ENCODE measurements at regions of chr3 and their contacts with region 1.

Region 1: DNA sequence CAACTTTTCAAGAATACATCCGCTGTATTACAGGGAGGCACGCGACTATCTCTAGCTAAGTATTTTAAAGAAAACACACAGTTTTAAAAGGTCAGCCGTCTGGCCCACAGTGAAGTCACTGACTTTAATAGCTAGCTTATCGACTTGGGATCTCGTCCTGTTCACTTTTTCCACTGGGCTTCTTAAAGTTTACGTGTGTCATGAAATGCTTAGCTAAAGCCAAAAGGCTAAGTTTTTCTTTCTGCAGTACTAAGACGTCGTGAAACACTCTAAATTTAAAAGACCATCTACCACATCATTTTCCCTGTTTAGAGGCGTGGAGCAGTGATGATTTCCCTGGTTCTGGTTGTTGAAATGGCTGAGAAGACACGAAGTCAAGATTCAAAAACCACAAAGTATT is 27.1 kb downstream of the LRIG1 start:
- DNase-seq: no peak
- ATAC-seq: no peak
- H3K4me3 ChIP-seq: no peak overlapping the region
- H3K4me3 Mint-ChIP-seq: peak overlapping the region; percentile 29 to 63 (median 60)
- H3K27ac ChIP-seq: no peak overlapping the region
- H3K27ac Mint-ChIP-seq: peak overlapping the region; percentile 59 to 77
- H3K4me1 ChIP-seq: peaks cover 9 to 24% of the 10 kb centered on the region in 2 experiments
- H3K4me1 Mint-ChIP-seq: peaks cover 15 to 62% (median 27%) of the 10 kb centered on the region in 3 donors
- H3K27me3 ChIP-seq: no peaks in the 10 kb centered on the region
- H3K27me3 Mint-ChIP-seq: no peaks in the 10 kb centered on the region

Region 2: GRCh38 chr3:66386925-66387650 is 86.6 kb before region 1 on chr3:
- CTCF ChIA-PET with region 1: interaction called in 1 of 2 experiments, 12 read pairs
- POLR2A ChIA-PET with region 1: no interaction called
- DNase-seq: no peak
- ATAC-seq: no peak
- H3K4me3 ChIP-seq: no peak overlapping the region
- H3K4me3 Mint-ChIP-seq: no peak overlapping the region
- H3K27ac ChIP-seq: no peak overlapping the region
- H3K27ac Mint-ChIP-seq: peak overlapping the region; percentile 43 to 66
- H3K4me1 ChIP-seq: peaks cover 0 to 7% of the 10 kb centered on the region in 2 experiments
- H3K4me1 Mint-ChIP-seq: peaks cover 43 to 58% (median 49%) of the 10 kb centered on the region in 3 donors
- H3K27me3 ChIP-seq: no peaks in the 10 kb centered on the region
- H3K27me3 Mint-ChIP-seq: no peaks in the 10 kb centered on the region

Region 3: GRCh38 chr3:66456711-66457173 is 16.9 kb before region 1 on chr3:
- CTCF ChIA-PET with region 1: no interaction called
- POLR2A ChIA-PET with region 1: no interaction called
- DNase-seq: peak in 8 of 35 experiments; percentile 5 to 29 (median 12)
- ATAC-seq: peak in 2 of 4 experiments; percentile 34 to 40
- H3K4me3 ChIP-seq: no peak overlapping the region
- H3K4me3 Mint-ChIP-seq: no peak overlapping the region
- H3K27ac ChIP-seq: no peak overlapping the region
- H3K27ac Mint-ChIP-seq: peak overlapping the region in 1 of 2 donors; percentile 23
- H3K4me1 ChIP-seq: peaks cover 0 to 10% of the 10 kb centered on the region in 2 experiments
- H3K4me1 Mint-ChIP-seq: peaks cover 4 to 34% (median 14%) of the 10 kb centered on the region in 3 donors
- H3K27me3 ChIP-seq: no peaks in the 10 kb centered on the region
- H3K27me3 Mint-ChIP-seq: no peaks in the 10 kb centered on the region

Region 4: DNA sequence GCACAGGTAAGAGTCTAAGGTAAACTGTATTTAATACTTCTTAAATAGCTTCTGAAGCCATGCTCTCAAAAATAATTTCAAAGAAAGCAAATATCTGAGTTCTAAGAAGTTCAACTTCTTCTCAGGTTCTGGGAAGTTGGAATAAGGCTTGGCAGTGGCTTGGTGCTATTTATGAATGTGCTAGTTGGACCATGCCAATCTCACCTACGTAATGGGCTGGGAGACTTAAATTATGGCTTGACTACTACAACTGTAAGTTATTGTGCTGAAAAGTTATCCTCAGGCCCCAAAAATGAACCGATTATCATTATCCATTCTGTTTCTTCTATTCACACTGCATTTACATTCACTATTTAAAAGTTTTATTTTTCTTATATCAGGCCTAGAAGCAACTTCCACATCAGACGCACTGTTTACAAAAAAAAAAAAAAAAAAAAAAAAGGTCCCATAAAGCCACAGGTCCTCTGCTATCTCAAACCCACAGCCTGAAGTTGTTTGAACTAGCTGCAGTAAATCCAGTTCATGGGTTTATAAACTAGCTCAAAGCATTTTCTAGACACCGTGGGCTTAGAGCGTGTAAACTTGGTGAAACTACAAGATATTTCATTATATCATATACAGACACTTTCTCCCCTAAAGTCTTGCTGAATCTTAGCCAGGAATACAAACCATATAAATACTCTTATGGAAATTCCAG is 23.7 kb after region 1 on chr3:
- CTCF ChIA-PET with region 1: interaction called in 1 of 2 experiments, 3 read pairs
- POLR2A ChIA-PET with region 1: interaction called in 1 of 2 experiments, 11 read pairs
- DNase-seq: peak in 2 of 35 experiments; percentile 10 to 49
- ATAC-seq: no peak
- H3K4me3 ChIP-seq: no peak overlapping the region
- H3K4me3 Mint-ChIP-seq: peak overlapping the region; percentile 92 to 99 (median 98)
- H3K27ac ChIP-seq: peak overlapping the region; percentile 60
- H3K27ac Mint-ChIP-seq: peak overlapping the region; percentile 76 to 94
- H3K4me1 ChIP-seq: peaks cover 50 to 51% of the 10 kb centered on the region in 2 experiments
- H3K4me1 Mint-ChIP-seq: peaks cover 81 to 92% (median 88%) of the 10 kb centered on the region in 3 donors
- H3K27me3 ChIP-seq: no peaks in the 10 kb centered on the region
- H3K27me3 Mint-ChIP-seq: no peaks in the 10 kb centered on the region

Region 5: DNA sequence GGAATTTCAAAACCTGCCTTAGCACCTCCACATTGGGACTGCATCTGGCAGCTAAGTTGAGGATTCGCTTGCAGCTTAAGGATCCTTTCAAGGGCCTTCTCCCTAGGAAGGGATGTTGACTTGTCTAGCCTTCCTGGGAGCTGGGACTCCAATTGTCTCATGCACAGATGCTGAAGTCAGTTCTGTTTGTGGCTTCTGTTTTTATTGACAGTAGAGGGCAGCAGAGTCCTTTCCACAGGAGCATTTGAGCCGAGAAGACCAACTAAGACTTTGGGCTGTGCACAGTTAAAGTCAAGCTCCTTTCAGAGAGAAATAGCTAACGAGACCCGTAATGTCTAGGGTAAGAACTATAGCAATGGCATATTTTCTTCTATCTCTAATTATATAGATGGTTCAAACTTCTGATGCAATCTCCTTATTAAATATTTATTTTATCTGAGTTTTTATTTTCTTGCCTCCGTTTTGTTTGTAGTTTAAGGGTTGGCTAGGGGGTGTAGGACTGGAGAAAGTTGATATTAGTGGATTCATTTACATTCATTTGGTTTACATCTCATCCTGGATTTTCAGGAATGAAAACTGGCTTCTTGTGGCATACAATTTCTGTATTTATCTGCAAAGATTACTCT is 464.8 kb after region 1 on chr3:
- CTCF ChIA-PET with region 1: no interaction called
- POLR2A ChIA-PET with region 1: no interaction called
- DNase-seq: peak in 16 of 35 experiments; percentile 0 to 65 (median 8)
- ATAC-seq: peak in 2 of 4 experiments; percentile 26 to 29
- H3K4me3 ChIP-seq: no peak overlapping the region
- H3K4me3 Mint-ChIP-seq: no peak overlapping the region
- H3K27ac ChIP-seq: no peak overlapping the region
- H3K27ac Mint-ChIP-seq: no peak overlapping the region
- H3K4me1 ChIP-seq: no peaks in the 10 kb centered on the region
- H3K4me1 Mint-ChIP-seq: no peaks in the 10 kb centered on the region
- H3K27me3 ChIP-seq: no peaks in the 10 kb centered on the region
- H3K27me3 Mint-ChIP-seq: peaks cover 16 to 18% of the 10 kb centered on the region in 2 donors

Measured in T-cell (primary cell).